Activated CD4-positive, alpha-beta T cell treated with anti-CD3 and anti-CD28 coated beads for 36 hours (primary cell): ENCODE measurements at regions of chr4 and their contacts with region 1.

Region 1: GRCh38 chr4:183407128-183407585 is 37.3 kb upstream of the CDKN2AIP start:
- DNase-seq: peak; percentile 95
- ATAC-seq: peak; percentile 98
- H3K4me3 Mint-ChIP-seq: peak overlapping the region; percentile 78
- H3K27ac Mint-ChIP-seq: peak overlapping the region; percentile 88
- H3K4me1 Mint-ChIP-seq: peaks cover 18% of the 10 kb centered on the region
- H3K27me3 Mint-ChIP-seq: no peaks in the 10 kb centered on the region

Region 2: DNA sequence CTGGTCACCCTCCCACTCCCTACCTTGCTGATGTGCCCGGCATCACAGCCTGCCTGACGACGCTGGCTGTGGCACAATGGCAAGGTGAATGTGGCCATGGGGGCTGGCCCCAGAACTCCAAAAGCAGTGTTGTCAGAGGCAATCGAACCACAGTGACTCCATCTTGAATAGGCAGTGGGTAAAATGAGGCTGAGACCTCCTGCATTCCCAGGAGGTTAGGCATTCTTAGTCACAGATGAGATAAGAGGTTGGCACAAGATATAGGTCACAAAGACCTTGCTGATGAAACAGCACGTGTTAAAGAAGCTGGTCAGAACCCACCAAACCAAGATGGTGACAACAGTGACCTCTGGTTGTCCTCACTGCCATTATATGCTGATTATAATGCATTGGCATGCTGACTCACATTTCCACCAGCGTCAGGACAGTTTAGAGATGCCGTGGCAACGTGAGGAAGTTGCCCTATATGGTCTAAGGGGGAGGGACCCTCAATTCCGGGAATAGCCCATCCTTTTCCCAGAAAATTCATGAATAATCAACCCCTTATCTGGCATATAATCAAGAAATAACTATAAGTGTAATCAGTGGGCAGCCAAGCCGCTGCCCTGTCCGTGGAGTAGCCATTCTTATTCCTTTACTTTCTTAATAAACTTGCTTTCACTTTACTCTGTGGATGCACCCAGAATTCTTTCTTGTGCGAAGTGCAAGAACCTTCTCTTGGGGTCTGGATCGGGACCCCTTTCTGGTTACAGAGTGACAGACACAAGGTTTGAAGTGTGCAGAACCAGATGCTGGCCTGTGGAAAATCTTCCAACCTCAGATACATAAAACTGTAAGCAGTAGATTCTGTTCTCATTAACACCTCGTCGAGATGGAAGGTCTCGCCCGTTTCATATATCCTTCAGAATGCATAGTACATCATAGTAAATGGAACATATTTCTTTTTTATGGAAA is 58.2 kb before region 1 on chr4:
- CTCF ChIA-PET with region 1: no interaction called
- POLR2A ChIA-PET with region 1: no interaction called
- intact Hi-C with region 1: loop called (anchors 1 to 2 kb)
- DNase-seq: peak; percentile 67
- ATAC-seq: peak; percentile 95
- H3K4me3 Mint-ChIP-seq: no peak overlapping the region
- H3K27ac Mint-ChIP-seq: peak overlapping the region; percentile 37
- H3K4me1 Mint-ChIP-seq: peaks cover 17% of the 10 kb centered on the region
- H3K27me3 Mint-ChIP-seq: peaks cover 20% of the 10 kb centered on the region

Region 3: DNA sequence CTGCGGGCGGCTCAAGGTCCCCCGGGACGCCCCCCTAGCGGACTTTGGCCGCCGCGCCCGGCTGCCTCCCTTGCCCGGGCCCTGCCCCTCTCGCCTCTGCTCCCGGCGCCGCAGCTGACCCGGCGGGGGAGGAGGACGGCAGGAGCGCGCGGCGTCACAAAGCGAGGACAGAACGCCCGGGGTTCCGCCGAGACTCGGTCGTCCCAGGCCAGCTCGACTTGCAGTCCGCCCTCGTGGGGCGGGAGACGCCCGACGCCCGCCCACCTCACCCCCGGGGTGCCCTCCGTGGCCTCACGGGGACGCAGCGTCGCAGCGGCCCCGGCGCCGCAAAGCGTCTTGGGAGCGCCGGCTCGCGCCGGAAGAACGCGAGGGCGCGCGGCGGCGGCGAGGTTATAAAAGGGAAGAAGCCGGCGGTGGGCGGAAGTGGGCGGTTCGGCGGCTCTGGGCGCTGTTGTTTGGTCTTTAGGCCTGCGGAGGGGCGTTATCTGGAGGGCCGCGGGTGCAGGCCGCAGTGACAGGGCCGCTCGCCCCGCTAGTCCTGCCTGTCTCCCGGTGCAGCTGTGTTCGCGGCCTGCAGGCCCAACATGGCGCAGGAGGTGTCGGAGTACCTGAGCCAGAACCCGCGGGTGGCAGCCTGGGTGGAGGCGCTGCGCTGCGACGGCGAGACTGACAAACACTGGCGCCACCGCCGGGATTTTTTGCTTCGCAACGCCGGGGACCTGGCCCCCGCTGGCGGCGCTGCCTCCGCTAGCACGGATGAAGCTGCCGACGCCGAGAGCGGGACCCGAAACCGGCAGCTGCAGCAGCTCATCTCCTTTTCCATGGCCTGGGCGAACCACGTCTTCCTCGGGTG is 37.3 kb after region 1 on chr4 and contains the start of gene CDKN2AIP:
- CTCF ChIA-PET with region 1: interaction called, 8 read pairs
- POLR2A ChIA-PET with region 1: no interaction called
- intact Hi-C with region 1: loop called (anchors 1 to 2 kb)
- DNase-seq: peak; percentile 95
- ATAC-seq: peak; percentile 87
- H3K4me3 Mint-ChIP-seq: peak within 1 kb of the TSS; percentile 97
- H3K27ac Mint-ChIP-seq: peak within 1 kb of the TSS; percentile 97
- H3K4me1 Mint-ChIP-seq: peaks cover 42% of the 10 kb centered on the region
- H3K27me3 Mint-ChIP-seq: no peaks in the 10 kb centered on the region
- total RNA-seq, gene CDKN2AIP: 19.4 to 22.8 TPM